Activated T-helper 1 cell treated with anti-CD3 and anti-CD28 coated beads, Interleukin-12 subunit alpha, Interleukin-12 subunit beta, Interleukin-2, Interleukin-4 antibody, amounts not matched to agents 30 ng/mL and 10 ng/mL and 1 ng/mL, durations not matched to agents 14 hours and 24 hours and 36 hours (primary cell): ENCODE measurements at regions of chrX and their contacts with region 1.

Region 1: DNA sequence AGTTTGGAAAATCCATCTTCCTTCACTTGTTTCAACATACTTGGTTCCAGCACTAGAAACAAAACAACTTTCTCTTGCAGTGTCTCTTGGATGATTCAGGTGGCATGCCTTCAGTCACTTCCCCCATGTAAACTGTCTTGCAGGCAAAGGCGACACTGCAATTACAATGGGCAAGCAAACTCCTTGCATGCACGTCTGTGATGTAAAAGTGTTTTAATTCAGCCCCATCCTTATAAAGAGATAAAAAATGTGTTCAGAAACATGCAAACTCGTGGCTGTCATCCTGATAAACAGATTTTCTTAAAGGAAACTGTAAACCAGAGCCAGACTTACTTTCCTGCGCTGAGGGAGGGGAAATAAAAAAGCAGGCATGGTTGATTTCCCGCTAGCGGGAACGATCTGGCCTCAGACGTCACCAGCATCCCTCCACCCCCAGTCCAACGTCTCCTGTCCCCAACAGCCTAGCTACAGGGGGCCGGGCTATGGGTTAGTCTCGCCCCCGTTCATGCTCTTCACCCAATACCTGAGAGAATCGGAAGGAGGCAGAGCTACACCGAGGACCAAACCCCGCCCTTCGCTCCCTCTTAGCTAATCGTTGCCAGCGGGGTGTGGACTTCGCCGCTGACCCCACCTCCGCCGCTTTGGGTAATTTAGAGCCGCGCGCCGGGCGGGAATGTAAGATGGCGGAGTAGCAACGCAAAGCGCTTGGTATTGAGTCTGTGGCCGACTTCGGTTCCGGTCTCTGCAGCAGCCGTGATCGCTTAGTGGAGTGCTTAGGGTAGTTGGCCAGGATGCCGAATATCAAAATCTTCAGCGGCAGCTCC is at the start of gene PRPS1:
- DNase-seq: peak; percentile 86
- H3K4me3 Mint-ChIP-seq: peak within 1 kb of the TSS; percentile 96
- H3K27ac Mint-ChIP-seq: peak within 1 kb of the TSS; percentile 93
- H3K4me1 Mint-ChIP-seq: peaks cover 30% of the 10 kb centered on the region
- H3K27me3 Mint-ChIP-seq: no peaks in the 10 kb centered on the region
- total RNA-seq, gene PRPS1: 97.9 and 101 TPM in 2 replicates

Region 2: DNA sequence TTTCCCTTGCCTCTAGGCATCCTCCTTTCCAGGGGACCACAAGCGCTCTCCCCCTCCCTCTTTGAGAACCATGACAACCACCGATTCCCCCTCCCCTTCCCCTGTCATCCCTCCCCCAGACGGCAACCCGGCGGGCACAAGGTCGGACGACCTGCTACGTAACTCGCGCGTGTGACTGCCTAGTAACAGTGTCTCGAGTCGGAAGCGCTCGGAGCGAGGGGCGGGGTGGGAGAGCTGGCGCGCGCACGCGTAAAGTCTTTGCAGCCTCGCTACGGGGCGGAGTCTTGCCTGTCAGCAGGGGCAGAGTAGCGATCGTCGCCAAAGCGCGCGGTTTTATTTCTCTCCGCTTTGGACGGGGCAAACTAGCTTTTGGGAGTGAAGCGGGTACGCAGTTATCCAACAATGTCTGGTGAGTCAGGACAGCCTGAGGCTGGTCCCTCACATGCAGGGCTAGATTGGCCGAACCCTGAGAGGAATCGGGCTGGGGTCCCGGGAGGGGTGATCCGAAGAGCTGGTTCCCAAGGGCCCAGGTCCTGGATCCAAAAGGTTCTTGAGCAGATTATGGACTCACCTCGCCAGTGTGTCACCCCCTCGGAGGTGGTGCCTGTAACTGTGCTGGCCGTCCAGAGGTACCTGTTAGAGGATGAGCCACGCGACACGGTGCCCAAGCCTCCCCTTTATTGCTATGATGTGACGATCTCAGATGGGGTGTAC is 1016.2 kb before region 1 on chrX and contains the start of gene RADX:
- intact Hi-C with region 1: loop called (anchors 5 kb)
- DNase-seq: peak; percentile 82
- H3K4me3 Mint-ChIP-seq: peak within 1 kb of the TSS; percentile 93
- H3K27ac Mint-ChIP-seq: peak within 1 kb of the TSS; percentile 89
- H3K4me1 Mint-ChIP-seq: peaks cover 26% of the 10 kb centered on the region
- H3K27me3 Mint-ChIP-seq: no peaks in the 10 kb centered on the region
- total RNA-seq, gene RADX: 5.6 and 6.3 TPM in 2 replicates

Region 3: GRCh38 chrX:107118322-107119147 is 509.5 kb before region 1 on chrX and contains the start of gene RBM41:
- intact Hi-C with region 1: loop called (anchors 5 kb)
- DNase-seq: peak; percentile 64
- H3K4me3 Mint-ChIP-seq: peak within 1 kb of the TSS; percentile 100
- H3K27ac Mint-ChIP-seq: peak within 1 kb of the TSS; percentile 99
- H3K4me1 Mint-ChIP-seq: peaks cover 41% of the 10 kb centered on the region
- H3K27me3 Mint-ChIP-seq: no peaks in the 10 kb centered on the region
- total RNA-seq, gene RBM41: 15.5 and 16.6 TPM in 2 replicates

Region 4: GRCh38 chrX:107654872-107655761 is 27.1 kb after region 1 on chrX:
- intact Hi-C with region 1: loop called (anchors 1 kb)
- DNase-seq: peak; percentile 38
- H3K4me3 Mint-ChIP-seq: no peak overlapping the region
- H3K27ac Mint-ChIP-seq: no peak overlapping the region
- H3K4me1 Mint-ChIP-seq: peaks cover 7% of the 10 kb centered on the region
- H3K27me3 Mint-ChIP-seq: no peaks in the 10 kb centered on the region

Region 5: DNA sequence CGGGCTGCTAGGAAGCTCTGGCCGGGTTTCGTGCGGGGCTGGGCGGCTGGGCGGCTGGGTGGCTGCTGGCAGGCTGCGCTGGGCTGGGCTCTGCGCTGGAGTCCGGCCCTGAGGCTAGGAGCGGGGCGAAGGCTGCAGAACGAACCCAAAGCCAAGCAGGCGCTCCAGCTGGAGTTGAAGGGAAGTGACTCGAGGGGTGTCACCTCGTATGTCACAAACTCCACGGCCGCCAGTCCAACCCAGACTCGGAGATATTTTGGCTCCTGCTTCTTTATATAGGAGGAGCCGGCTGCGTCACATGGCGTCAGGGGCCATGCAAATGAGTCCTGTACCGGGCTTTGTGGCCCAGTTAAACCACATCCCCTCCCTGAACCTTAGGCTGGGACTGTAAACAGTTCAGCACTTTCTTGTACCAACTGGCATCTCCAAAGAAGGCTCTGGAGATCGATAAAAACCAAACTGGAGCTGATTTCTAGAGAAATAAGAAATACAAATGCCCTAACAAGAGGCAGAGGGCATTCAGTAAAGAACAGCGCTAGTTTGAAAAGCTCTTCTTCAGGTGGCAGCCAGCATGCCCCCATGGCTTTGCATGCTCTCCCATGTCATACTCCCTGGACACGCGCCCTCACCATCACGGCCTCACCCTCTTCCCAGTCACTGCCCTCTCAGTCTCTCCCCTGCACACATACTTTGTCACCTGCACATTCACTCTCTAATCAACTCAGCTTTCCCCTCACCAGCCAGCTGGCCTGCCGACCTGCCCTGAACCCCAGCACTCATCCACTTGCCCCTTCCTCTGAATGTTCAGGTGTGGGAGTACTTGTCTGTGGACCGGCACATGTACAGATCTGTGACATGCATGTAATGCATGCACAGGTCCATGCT is 89.0 kb after region 1 on chrX:
- intact Hi-C with region 1: loop called (anchors 1 kb)
- DNase-seq: peak; percentile 84
- H3K4me3 Mint-ChIP-seq: peak overlapping the region; percentile 93
- H3K27ac Mint-ChIP-seq: peak overlapping the region; percentile 87
- H3K4me1 Mint-ChIP-seq: peaks cover 46% of the 10 kb centered on the region
- H3K27me3 Mint-ChIP-seq: no peaks in the 10 kb centered on the region

Region 6: DNA sequence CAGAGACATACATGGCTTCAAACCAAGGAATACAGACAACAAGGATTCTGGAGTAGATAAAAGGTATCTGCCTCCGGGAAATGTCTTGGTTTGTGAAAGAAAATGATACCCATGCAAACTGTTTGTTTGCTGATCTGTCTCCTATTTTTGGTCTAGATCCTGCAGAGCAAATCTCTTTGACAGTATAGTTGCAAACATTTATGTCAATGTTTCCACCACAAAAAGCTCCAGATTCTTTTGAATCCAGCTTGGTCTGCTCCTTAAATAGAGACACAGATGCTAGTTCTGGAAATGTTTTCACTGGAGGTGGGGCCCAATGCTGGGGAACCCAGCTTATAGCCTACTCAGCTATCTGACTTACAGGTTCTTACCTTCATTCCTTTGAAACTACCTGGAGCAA is 583.3 kb after region 1 on chrX:
- intact Hi-C with region 1: no loop called
- DNase-seq: no peak
- H3K4me3 Mint-ChIP-seq: no peak overlapping the region
- H3K27ac Mint-ChIP-seq: no peak overlapping the region
- H3K4me1 Mint-ChIP-seq: no peaks in the 10 kb centered on the region
- H3K27me3 Mint-ChIP-seq: no peaks in the 10 kb centered on the region